Thyroid gland (tissue), 4 donors: ENCODE measurements at regions of chr4 and their contacts with region 1.

Region 1: GRCh38 chr4:37977471-37978247 is 17.5 kb downstream of the PTTG2 start:
- DNase-seq: peak; percentile 73 to 80
- H3K4me3 ChIP-seq: peak overlapping the region; percentile 81 to 91 (median 83)
- H3K27ac ChIP-seq: peak overlapping the region; percentile 91 to 97 (median 94)
- H3K4me1 ChIP-seq: peaks cover 31 to 39% of the 10 kb centered on the region in 2 donors
- H3K27me3 ChIP-seq: no peaks in the 10 kb centered on the region
- CTCF ChIP-seq: peak; percentile 36 to 71 (median 60)
- POLR2A ChIP-seq: no peak

Region 2: DNA sequence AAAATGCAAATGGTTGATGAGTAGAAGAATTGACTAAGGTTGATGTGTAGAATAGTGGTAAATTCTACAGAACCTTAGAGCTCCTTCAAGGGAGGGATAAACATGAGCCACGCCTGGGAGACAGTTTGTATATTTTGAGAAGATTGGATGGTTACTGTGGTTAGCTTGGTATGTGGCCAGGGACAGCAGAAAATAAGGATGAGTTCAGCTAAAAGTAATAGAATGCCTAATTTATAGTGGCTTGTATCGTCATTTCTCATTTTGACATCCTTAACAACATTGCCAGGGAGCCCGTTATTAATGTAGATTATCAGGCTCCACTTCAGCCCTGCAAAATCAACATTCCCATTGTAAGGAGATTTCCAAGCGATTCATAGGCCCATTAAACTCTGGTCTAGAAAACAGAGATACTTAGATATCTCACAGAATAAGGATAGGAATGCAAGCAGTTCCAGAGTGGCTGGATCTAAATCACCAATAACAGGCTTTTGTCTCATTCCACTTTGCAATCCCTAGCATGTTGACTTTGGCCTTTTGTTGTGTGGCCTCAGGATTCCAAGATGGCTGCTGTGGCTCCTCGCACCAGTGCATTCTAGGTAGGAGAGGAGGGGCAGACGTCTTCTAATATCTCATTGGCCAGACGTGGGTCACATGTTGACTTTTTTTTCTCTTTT is 23.9 kb before region 1 on chr4:
- intact Hi-C with region 1: no loop called
- DNase-seq: no peak
- H3K4me3 ChIP-seq: no peak overlapping the region
- H3K27ac ChIP-seq: no peak overlapping the region
- H3K4me1 ChIP-seq: no peaks in the 10 kb centered on the region
- H3K27me3 ChIP-seq: no peaks in the 10 kb centered on the region
- CTCF ChIP-seq: no peak
- POLR2A ChIP-seq: no peak

Region 3: DNA sequence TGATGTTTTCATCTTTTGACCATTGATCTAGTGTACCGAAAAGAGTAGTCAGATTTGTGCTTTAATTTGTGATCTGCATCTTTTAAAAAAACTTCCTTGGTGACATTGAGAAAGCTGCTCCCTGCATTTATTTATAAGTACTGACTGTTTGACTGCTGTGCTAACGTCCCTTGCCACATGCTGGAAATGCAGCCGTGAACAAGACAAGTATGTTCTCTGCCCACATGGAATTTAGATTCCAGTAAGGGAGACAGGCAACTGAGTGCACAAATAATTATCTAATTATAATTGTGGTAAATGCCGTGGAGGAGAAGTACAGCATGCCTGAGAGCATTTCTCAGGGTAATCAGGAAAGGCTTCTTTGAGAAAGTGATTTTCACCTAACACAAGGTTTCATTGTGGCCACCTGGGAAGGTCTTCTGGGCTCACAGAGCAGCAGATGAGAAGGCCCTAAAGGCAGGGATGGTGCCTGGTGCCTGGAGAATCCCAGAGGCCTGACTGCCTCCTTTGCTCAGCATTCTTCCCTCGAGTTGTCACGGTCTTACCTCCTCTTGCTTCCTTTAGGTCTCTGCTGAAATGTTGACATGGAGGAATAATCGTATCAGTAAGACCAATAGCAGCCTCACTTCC is 38.3 kb after region 1 on chr4:
- intact Hi-C with region 1: loop called (anchors 5 kb)
- DNase-seq: no peak
- H3K4me3 ChIP-seq: no peak overlapping the region
- H3K27ac ChIP-seq: no peak overlapping the region
- H3K4me1 ChIP-seq: peaks cover 21 to 29% of the 10 kb centered on the region in 2 donors
- H3K27me3 ChIP-seq: no peaks in the 10 kb centered on the region
- CTCF ChIP-seq: no peak
- POLR2A ChIP-seq: no peak

Region 4: DNA sequence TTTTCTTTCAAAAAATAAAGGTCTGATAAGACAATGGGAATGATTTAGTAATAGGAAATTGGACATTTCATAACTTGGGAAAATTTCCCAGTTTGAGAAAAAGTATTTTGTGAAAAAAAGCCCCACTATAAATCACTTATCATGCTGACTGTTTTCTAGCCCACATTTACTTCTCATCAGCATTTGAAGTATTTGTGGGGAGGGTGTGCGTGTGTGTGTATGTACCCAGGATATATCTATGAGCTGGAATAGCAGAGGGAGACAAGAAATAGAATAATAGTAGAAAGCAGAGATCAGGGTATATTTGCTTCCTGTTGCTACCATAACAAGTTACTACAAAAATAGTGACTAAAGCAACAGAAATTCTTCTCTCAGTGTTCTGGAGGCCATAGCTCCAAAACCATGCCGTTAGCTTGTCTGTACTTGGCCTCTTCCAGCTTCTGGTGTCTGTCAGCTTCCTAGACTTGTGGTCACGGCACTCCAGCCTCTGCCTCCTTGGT is 122.3 kb after region 1 on chr4:
- intact Hi-C with region 1: no loop called
- DNase-seq: no peak
- H3K4me3 ChIP-seq: no peak overlapping the region
- H3K27ac ChIP-seq: peak overlapping the region in 1 of 3 donors; percentile 20
- H3K4me1 ChIP-seq: peaks cover 0 to 3% of the 10 kb centered on the region in 2 donors
- H3K27me3 ChIP-seq: no peaks in the 10 kb centered on the region
- CTCF ChIP-seq: no peak
- POLR2A ChIP-seq: no peak